MCF 10A (cell line): ENCODE measurements at regions of chr12 and their contacts with region 1.

Region 1: DNA sequence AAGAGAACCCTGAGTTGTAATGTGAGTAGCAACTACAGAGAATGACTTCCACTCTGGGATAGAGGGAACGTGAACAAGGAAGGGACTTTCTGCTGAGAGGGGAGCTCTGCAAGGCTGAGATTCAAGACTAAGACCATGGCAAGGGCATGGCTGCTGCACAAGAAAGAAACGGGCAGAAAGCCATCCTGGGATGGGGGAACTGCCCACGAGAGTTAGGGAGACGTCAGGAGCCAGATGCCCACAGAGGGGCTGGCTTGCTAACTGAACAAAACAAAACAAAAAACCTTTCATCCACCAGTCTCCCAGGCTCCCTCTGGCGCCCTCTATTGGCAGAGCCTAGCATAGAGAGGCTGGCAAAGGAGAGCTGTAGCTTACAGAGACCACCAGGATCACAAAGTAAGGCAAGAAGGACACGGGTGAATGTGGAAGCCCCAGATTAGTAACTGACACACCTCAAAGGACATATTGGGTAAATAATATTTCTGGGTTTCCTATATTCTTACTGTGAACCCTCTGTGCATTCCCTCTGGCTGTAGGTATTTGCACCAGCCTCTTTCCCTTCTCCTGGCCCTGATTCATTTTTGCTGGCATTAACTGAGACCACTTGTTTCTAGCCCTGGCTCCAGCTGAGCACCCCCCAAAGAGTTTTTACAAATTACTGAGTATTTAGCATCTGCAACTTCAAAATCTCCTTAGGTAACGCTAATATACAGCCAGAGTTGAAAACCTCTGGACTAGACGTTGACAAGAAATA is 338.3 kb downstream of the EMP1 start:
- DNase-seq: peak; percentile 75
- H3K4me3 Mint-ChIP-seq: no peak overlapping the region
- H3K27ac Mint-ChIP-seq: no peak overlapping the region
- H3K4me1 Mint-ChIP-seq: no peaks in the 10 kb centered on the region
- H3K27me3 Mint-ChIP-seq: peaks cover 27% of the 10 kb centered on the region
- CTCF ChIP-seq: peak; percentile 86

Region 2: DNA sequence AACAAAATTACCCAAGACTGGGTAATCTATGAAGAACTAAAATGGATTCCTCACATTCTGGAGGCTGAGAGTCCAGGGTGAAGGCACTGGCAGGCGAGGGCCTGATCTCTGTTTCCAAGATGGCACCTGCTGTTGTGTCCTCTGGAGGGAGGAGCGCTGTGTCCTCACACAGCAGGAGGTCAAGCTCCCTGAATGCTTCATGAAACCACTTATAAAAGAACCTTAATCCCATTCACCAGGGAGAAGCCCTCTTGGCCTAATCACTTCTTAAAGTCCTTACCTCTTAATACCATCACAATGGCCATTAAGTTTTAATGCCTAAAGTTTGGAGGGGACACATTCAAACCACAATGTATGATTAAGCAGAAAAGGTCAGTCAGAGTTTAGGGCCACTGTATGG is 165.9 kb before region 1 on chr12:
- CTCF ChIA-PET with region 1: interaction called, 12 read pairs
- POLR2A ChIA-PET with region 1: no interaction called
- intact Hi-C with region 1: no loop called
- DNase-seq: no peak
- H3K4me3 Mint-ChIP-seq: no peak overlapping the region
- H3K27ac Mint-ChIP-seq: no peak overlapping the region
- H3K4me1 Mint-ChIP-seq: no peaks in the 10 kb centered on the region
- H3K27me3 Mint-ChIP-seq: peaks cover 19% of the 10 kb centered on the region
- CTCF ChIP-seq: no peak

Region 3: GRCh38 chr12:13523536-13524307 is 11.1 kb before region 1 on chr12:
- CTCF ChIA-PET with region 1: interaction called, 19 read pairs
- POLR2A ChIA-PET with region 1: interaction called, 3 read pairs
- intact Hi-C with region 1: no loop called
- DNase-seq: no peak
- H3K4me3 Mint-ChIP-seq: no peak overlapping the region
- H3K27ac Mint-ChIP-seq: no peak overlapping the region
- H3K4me1 Mint-ChIP-seq: no peaks in the 10 kb centered on the region
- H3K27me3 Mint-ChIP-seq: peaks cover 21% of the 10 kb centered on the region
- CTCF ChIP-seq: no peak

Region 4: GRCh38 chr12:13546231-13546630 is 11.4 kb after region 1 on chr12:
- CTCF ChIA-PET with region 1: interaction called, 25 read pairs
- POLR2A ChIA-PET with region 1: no interaction called
- intact Hi-C with region 1: no loop called
- DNase-seq: no peak
- H3K4me3 Mint-ChIP-seq: no peak overlapping the region
- H3K27ac Mint-ChIP-seq: no peak overlapping the region
- H3K4me1 Mint-ChIP-seq: no peaks in the 10 kb centered on the region
- H3K27me3 Mint-ChIP-seq: peaks cover 23% of the 10 kb centered on the region
- CTCF ChIP-seq: no peak

Region 5: GRCh38 chr12:13666806-13667205 is 132.0 kb after region 1 on chr12:
- CTCF ChIA-PET with region 1: no interaction called
- POLR2A ChIA-PET with region 1: no interaction called
- intact Hi-C with region 1: no loop called
- DNase-seq: no peak
- H3K4me3 Mint-ChIP-seq: no peak overlapping the region
- H3K27ac Mint-ChIP-seq: no peak overlapping the region
- H3K4me1 Mint-ChIP-seq: no peaks in the 10 kb centered on the region
- H3K27me3 Mint-ChIP-seq: peaks cover 36% of the 10 kb centered on the region
- CTCF ChIP-seq: no peak